ENCODE measurements at regions of chr11 and their contacts with region 1.

Region 1: GRCh38 chr11:59625703-59626102 is 10.1 kb upstream of the OSBP start:
- DNase-seq: no peak
- H3K4me3 Mint-ChIP-seq: no peak overlapping the region
- H3K27ac Mint-ChIP-seq: no peak overlapping the region
- H3K4me1 Mint-ChIP-seq: peaks cover 1% of the 10 kb centered on the region
- H3K27me3 Mint-ChIP-seq: no peaks in the 10 kb centered on the region

Region 2: GRCh38 chr11:59582006-59582405 is 43.7 kb before region 1 on chr11:
- CTCF ChIA-PET with region 1: no interaction called
- POLR2A ChIA-PET with region 1: no interaction called
- DNase-seq: no peak
- H3K4me3 Mint-ChIP-seq: no peak overlapping the region
- H3K27ac Mint-ChIP-seq: no peak overlapping the region
- H3K4me1 Mint-ChIP-seq: no peaks in the 10 kb centered on the region
- H3K27me3 Mint-ChIP-seq: no peaks in the 10 kb centered on the region

Region 3: DNA sequence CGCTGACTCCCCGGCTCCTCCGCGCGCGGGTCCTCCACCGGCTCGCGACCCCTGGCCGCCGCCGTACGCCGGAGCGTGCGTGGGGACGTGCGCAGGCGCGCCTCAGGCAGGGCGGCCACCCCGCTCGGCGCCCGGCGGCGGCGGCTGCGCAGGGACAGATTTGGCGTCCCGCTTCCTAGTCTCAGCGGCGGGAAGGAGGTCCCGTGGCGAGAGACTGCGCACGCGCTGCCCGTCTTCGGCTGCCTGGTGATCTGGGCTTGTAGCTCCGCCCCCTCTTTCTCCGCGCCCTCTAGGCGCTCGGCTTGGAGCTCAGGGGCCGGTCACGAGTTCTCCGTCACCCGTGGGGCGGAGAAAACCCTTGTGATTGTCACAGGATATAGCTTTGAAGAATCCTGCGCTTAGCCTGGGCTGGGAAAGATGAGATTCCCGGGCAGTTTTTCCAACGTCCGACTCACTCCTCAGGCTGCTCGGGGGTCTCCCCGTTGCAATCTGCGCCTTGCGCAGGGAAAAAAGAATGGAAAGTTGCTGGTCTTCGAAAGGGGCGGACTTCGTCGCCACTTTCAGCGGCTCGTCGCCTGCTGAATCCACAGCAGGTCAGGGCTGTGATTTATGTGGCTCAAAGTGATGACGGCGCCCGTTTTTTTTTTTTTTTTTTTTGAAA is 43.4 kb after region 1 on chr11 and contains the start of gene PATL1:
- CTCF ChIA-PET with region 1: interaction called, 10 read pairs
- POLR2A ChIA-PET with region 1: no interaction called
- DNase-seq: peak; percentile 99
- H3K4me3 Mint-ChIP-seq: peak within 1 kb of the TSS; percentile 89
- H3K27ac Mint-ChIP-seq: peak within 1 kb of the TSS; percentile 98
- H3K4me1 Mint-ChIP-seq: peaks cover 38% of the 10 kb centered on the region
- H3K27me3 Mint-ChIP-seq: no peaks in the 10 kb centered on the region
- total RNA-seq, gene PATL1: 47.2 to 59.6 TPM

Measured in activated CD4-positive, alpha-beta T cell treated with anti-CD3 and anti-CD28 coated beads, Interleukin-2, amount 10 ng/mL, durations not matched to agents 7 days and 5 days (primary cell).